ENCODE measurements at regions of chr10 and their contacts with region 1.

Region 1: DNA sequence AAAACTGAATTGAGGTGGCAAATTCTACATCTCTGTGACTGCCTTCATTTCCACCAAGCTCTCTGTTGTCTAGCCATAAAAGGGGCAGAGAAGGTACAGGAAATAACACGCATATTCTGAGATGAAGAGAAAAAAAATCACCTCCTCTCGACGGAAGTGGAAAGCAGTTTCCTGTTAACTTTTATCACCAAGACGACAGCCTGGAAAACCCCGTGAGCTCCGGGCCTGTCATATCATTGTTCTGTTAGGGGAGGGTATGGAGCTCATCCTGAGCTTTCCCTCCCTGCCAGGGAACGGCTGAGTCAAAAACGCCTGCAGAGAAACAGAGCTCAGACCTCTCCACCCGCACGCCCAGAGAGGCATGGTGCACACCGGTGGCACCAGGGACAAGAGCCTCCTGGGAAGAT is 200.3 kb downstream of the PRPF18 start:
- DNase-seq: peak in 1 of 2 donors; percentile 18
- ATAC-seq: peak; percentile 43

Region 2: GRCh38 chr10:13160934-13161856 is 625.8 kb before region 1 on chr10 and contains the start of gene MCM10:
- intact Hi-C with region 1: no loop called
- DNase-seq: peak; percentile 99
- ATAC-seq: peak; percentile 99
- total RNA-seq, gene MCM10: 1.9 to 5.0 TPM

Region 3: GRCh38 chr10:13956826-13957225 is 169.8 kb after region 1 on chr10:
- intact Hi-C with region 1: loop called in 1 of 2 experiments (anchors 10 kb)
- DNase-seq: peak; percentile 8 to 52
- ATAC-seq: no peak

Region 4: GRCh38 chr10:14093730-14094484 is 306.9 kb after region 1 on chr10:
- intact Hi-C with region 1: loop called in 1 of 2 experiments (anchors 5 kb)
- DNase-seq: no peak
- ATAC-seq: no peak

Measured in left colon (tissue), 2 donors.